MCF 10A (cell line): ENCODE measurements at regions of chr22 and their contacts with region 1.

Region 1: GRCh38 chr22:37807410-37808293 is at the start of gene GCAT:
- DNase-seq: peak; percentile 96
- H3K4me3 Mint-ChIP-seq: peak within 1 kb of the TSS; percentile 78
- H3K27ac Mint-ChIP-seq: peak within 1 kb of the TSS; percentile 59
- H3K4me1 Mint-ChIP-seq: peaks cover 13% of the 10 kb centered on the region
- H3K27me3 Mint-ChIP-seq: no peaks in the 10 kb centered on the region
- CTCF ChIP-seq: no peak
- total RNA-seq, gene GCAT: 21.5 and 32.8 TPM in 2 replicates

Region 2: GRCh38 chr22:37658133-37659065 is 149.3 kb before region 1 on chr22 and contains the start of gene PDXP:
- CTCF ChIA-PET with region 1: interaction called, 3 read pairs
- POLR2A ChIA-PET with region 1: interaction called, 10 read pairs
- intact Hi-C with region 1: no loop called
- DNase-seq: peak; percentile 100
- H3K4me3 Mint-ChIP-seq: peak within 1 kb of the TSS; percentile 89
- H3K27ac Mint-ChIP-seq: peak within 1 kb of the TSS; percentile 87
- H3K4me1 Mint-ChIP-seq: peaks cover 22% of the 10 kb centered on the region
- H3K27me3 Mint-ChIP-seq: no peaks in the 10 kb centered on the region
- CTCF ChIP-seq: no peak
- total RNA-seq, gene PDXP: 10.3 and 10.5 TPM in 2 replicates

Region 3: GRCh38 chr22:37817705-37818408 is 10.2 kb after region 1 on chr22:
- CTCF ChIA-PET with region 1: interaction called, 8 read pairs
- POLR2A ChIA-PET with region 1: interaction called, 20 read pairs
- intact Hi-C with region 1: no loop called
- DNase-seq: peak; percentile 71
- H3K4me3 Mint-ChIP-seq: no peak overlapping the region
- H3K27ac Mint-ChIP-seq: no peak overlapping the region
- H3K4me1 Mint-ChIP-seq: peaks cover 6% of the 10 kb centered on the region
- H3K27me3 Mint-ChIP-seq: no peaks in the 10 kb centered on the region
- CTCF ChIP-seq: peak; percentile 92

Region 4: GRCh38 chr22:37849089-37849751 is 41.6 kb after region 1 on chr22 and contains the start of gene EIF3L:
- CTCF ChIA-PET with region 1: no interaction called
- POLR2A ChIA-PET with region 1: interaction called, 39 read pairs
- intact Hi-C with region 1: no loop called
- DNase-seq: peak; percentile 89
- H3K4me3 Mint-ChIP-seq: peak within 1 kb of the TSS; percentile 96
- H3K27ac Mint-ChIP-seq: peak within 1 kb of the TSS; percentile 99
- H3K4me1 Mint-ChIP-seq: peaks cover 24% of the 10 kb centered on the region
- H3K27me3 Mint-ChIP-seq: no peaks in the 10 kb centered on the region
- CTCF ChIP-seq: no peak
- total RNA-seq, gene EIF3L: 395 and 505 TPM in 2 replicates

Region 5: DNA sequence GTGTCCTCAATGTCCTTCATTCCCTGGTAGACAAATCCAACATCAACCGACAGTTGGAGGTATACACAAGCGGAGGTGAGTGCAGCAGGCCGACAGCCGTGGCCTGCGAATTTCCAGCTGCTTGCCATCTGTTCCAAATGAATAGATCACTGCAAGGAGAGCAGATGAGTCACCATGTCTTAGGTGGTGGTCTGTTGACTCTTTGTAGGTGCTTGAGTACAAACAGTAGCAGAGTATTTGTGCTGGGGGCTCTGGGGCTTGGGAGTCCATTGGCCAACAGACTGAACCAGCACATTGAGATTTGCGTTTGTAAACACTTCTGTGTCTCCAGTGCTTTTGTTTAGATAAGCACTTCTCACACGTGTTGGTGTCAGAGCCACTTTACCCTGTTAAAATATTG is 62.6 kb after region 1 on chr22:
- CTCF ChIA-PET with region 1: no interaction called
- POLR2A ChIA-PET with region 1: no interaction called
- intact Hi-C with region 1: no loop called
- DNase-seq: no peak
- H3K4me3 Mint-ChIP-seq: no peak overlapping the region
- H3K27ac Mint-ChIP-seq: no peak overlapping the region
- H3K4me1 Mint-ChIP-seq: no peaks in the 10 kb centered on the region
- H3K27me3 Mint-ChIP-seq: no peaks in the 10 kb centered on the region
- CTCF ChIP-seq: no peak